ENCODE measurements at regions of chr17 and their contacts with region 1.

Region 1: DNA sequence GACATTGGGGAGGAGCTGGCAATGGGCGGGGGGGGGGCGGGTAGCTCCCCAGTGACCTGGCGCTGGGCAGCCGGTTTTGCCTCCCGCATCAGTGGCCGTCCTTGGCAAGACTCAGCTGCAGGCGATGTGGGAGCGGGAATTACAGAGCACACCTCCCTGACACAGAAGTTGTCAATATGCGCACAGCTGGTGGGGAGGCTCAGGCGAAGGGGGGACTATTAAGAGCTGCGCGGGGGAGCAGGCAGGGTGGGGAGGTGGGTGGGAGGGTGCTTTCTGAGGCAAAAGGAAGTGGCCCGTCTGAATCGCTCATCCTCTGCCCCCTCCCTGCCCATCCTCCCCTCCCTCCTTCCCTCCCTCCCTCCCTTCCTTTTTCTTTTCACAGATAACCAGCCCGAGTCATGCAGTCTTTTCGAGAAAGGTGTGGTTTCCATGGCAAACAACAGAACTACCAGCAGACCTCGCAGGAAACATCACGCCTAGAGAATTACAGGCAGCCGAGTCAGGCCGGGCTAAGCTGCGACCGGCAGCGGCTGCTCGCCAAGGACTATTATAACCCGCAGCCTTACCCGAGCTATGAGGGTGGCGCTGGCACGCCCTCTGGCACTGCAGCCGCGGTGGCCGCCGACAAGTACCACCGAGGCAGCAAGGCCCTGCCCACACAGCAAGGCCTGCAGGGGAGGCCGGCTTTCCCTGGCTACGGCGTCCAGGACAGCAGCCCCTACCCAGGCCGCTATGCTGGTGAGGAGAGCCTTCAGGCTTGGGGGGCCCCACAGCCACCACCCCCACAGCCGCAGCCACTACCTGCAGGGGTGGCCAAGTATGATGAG is 44.0 kb downstream of the SREBF1 start:
- DNase-seq: peak; percentile 78
- H3K4me3 ChIP-seq: peak overlapping the region in 2 of 8 donors; percentile 12 to 40
- H3K27ac ChIP-seq: peak overlapping the region in 6 of 8 donors; percentile 8 to 81 (median 69)
- H3K4me1 ChIP-seq: peaks cover 29 to 64% (median 50%) of the 10 kb centered on the region in 6 donors
- H3K27me3 ChIP-seq: no peaks in the 10 kb centered on the region
- CTCF ChIP-seq: no peak
- POLR2A ChIP-seq: no peak

Region 2: GRCh38 chr17:17749921-17750320 is 42.8 kb before region 1 on chr17:
- intact Hi-C with region 1: loop called (anchors 10 kb)
- DNase-seq: no peak
- H3K4me3 ChIP-seq: peak overlapping the region in 2 of 8 donors; percentile 20 to 54
- H3K27ac ChIP-seq: peak overlapping the region; percentile 23 to 93 (median 82)
- H3K4me1 ChIP-seq: peaks cover 39 to 94% (median 79%) of the 10 kb centered on the region in 6 donors
- H3K27me3 ChIP-seq: no peaks in the 10 kb centered on the region
- CTCF ChIP-seq: no peak
- POLR2A ChIP-seq: no peak

Measured in spleen (tissue), 13 donors.